ENCODE measurements at regions of chr19 and their contacts with region 1.

Region 1: DNA sequence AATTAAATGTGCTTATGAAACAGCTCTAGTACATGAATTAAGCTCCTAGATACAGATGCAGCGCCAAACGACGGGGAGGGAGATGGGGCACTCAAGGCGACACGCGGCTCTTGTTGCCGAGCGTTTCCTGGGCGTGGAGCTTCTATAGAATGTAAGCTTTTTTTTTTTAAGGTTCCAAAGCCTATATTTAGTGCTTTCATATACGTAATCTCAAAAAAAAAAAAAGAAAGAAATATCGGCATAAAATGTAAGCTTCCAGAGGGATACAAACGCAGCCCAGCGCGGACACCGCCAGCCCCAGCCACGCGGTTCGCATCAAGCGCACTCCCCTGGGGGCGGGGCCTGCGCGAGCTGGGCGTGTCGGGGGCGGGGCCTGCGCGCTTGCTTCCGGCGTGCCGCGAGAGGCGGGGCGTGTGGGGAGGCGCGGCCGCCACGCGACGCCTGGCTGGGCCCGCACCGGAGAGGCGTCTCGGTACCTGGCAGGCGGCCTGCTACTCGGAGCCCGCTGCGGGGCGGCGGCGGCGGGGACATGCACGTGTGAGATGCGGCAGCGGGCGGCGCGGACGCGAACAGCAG is at the start of gene URI1:
- DNase-seq: peak; percentile 94
- H3K4me3 Mint-ChIP-seq: peak within 1 kb of the TSS; percentile 97
- H3K27ac Mint-ChIP-seq: peak within 1 kb of the TSS; percentile 90
- H3K4me1 Mint-ChIP-seq: peaks cover 38% of the 10 kb centered on the region
- H3K27me3 Mint-ChIP-seq: peaks cover 2% of the 10 kb centered on the region
- total RNA-seq, gene URI1: 65.9 to 69.8 TPM

Region 2: GRCh38 chr19:29587518-29587986 is 354.4 kb before region 1 on chr19:
- CTCF ChIA-PET with region 1: no interaction called
- intact Hi-C with region 1: loop called (anchors 5 kb)
- DNase-seq: peak; percentile 84
- H3K4me3 Mint-ChIP-seq: no peak overlapping the region
- H3K27ac Mint-ChIP-seq: peak overlapping the region; percentile 76
- H3K4me1 Mint-ChIP-seq: peaks cover 18% of the 10 kb centered on the region
- H3K27me3 Mint-ChIP-seq: peaks cover 39% of the 10 kb centered on the region

Region 3: DNA sequence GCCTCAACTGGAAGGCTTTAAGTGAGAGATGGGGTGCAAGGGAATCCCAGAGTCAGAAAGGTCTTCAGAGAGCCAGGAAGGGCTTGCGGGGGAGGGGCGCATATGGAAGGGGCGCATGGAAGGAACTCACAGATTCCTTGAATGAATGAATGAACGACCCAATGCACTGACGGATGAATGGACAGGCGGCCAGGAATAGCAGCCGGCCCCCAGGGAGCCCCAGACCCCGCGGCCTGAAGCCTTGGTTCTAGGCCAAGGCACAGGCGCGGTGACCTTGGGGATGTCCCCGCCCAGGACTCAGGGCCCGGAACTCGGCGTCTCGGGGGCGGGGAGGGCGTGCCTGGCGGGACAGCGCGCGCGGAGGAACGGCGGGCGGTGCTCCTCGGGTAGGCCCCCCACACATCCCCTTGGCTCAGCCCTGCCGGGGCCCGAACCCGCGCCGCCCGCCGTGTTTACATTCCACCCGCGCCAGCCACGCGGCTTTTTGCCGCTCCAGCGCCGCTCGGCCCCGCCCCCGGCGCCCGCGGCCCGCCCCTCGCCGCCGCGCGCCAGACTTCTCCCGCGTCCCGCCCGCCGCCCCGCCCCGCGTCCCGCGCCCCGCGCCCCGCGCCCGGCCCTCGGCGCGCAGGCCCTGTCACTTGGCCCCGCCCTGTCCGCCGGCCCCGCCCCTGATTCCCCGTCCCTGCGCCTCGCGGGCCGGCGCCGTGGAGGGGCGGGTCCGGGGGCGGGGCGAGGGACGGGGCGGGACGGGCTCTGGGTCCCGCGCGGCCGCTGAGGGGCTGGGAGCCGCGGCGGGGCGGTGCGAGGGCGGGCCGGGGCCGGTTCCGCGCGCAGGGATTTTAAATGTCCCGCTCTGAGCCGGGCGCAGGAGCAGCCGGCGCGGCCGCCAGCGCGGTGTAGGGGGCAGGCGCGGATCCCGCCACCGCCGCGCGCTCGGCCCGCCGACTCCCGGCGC is 130.5 kb before region 1 on chr19 and contains the start of gene CCNE1:
- CTCF ChIA-PET with region 1: no interaction called
- intact Hi-C with region 1: loop called (anchors 2 kb)
- DNase-seq: peak; percentile 97
- H3K4me3 Mint-ChIP-seq: peak within 1 kb of the TSS; percentile 84
- H3K27ac Mint-ChIP-seq: peak within 1 kb of the TSS; percentile 88
- H3K4me1 Mint-ChIP-seq: peaks cover 11% of the 10 kb centered on the region
- H3K27me3 Mint-ChIP-seq: no peaks in the 10 kb centered on the region
- total RNA-seq, gene CCNE1: 31.2 to 34.1 TPM

Region 4: GRCh38 chr19:29844891-29845572 is 96.9 kb before region 1 on chr19:
- CTCF ChIA-PET with region 1: no interaction called
- intact Hi-C with region 1: loop called (anchors 1 kb)
- DNase-seq: peak; percentile 96
- H3K4me3 Mint-ChIP-seq: peak overlapping the region; percentile 83
- H3K27ac Mint-ChIP-seq: peak overlapping the region; percentile 79
- H3K4me1 Mint-ChIP-seq: peaks cover 10% of the 10 kb centered on the region
- H3K27me3 Mint-ChIP-seq: no peaks in the 10 kb centered on the region

Region 5: DNA sequence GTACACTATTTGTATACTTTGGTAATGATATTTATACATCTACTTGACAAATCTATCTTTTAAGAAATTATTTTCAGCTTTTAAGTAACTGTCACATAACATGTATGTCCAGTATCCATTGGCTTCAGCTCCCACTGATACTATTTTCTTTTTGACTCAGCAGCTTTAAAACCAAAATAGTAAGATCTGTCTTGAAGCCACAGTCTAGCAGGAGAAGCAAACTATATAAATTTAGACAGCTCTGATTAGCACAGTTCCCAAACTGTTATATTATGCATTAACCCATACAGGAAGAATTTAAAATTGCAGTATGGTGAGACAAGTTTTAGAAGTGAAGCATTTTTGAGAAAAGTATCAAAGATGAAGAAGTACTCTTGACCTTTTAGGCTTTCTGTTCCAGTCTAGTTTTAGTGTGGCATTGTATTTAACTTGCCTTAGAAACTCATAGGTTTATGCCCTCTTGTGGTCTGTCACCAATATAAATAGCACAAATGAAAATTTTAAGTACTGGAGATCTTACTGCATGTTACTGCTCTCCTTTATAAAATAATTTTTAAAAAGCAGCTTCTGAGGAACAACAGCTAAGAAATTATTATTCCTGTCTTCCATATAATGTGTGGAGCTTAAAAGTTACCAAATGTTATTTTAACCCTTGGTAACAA is 24.8 kb after region 1 on chr19:
- CTCF ChIA-PET with region 1: interaction called, 11 read pairs
- intact Hi-C with region 1: no loop called
- DNase-seq: no peak
- H3K4me3 Mint-ChIP-seq: no peak overlapping the region
- H3K27ac Mint-ChIP-seq: no peak overlapping the region
- H3K4me1 Mint-ChIP-seq: peaks cover 86% of the 10 kb centered on the region
- H3K27me3 Mint-ChIP-seq: no peaks in the 10 kb centered on the region

Region 6: GRCh38 chr19:31214086-31214485 is 1272.2 kb after region 1 on chr19:
- CTCF ChIA-PET with region 1: no interaction called
- intact Hi-C with region 1: loop called (anchors 10 kb)
- DNase-seq: peak; percentile 97
- H3K4me3 Mint-ChIP-seq: peak overlapping the region; percentile 60
- H3K27ac Mint-ChIP-seq: peak overlapping the region; percentile 99
- H3K4me1 Mint-ChIP-seq: peaks cover 40% of the 10 kb centered on the region
- H3K27me3 Mint-ChIP-seq: no peaks in the 10 kb centered on the region